ENCODE measurements at regions of chr11 and their contacts with region 1.

Region 1: GRCh38 chr11:68297812-68298658 is 14.4 kb upstream of the LRP5 start:
- DNase-seq: no peak
- ATAC-seq: peak; percentile 99
- H3K4me3 ChIP-seq: no peak overlapping the region
- H3K27ac ChIP-seq: no peak overlapping the region
- H3K4me1 ChIP-seq: peaks cover 9% of the 10 kb centered on the region
- H3K27me3 ChIP-seq: no peaks in the 10 kb centered on the region
- CTCF ChIP-seq: peak; percentile 95 to 99 (median 98)
- EP300 ChIP-seq: no peak
- POLR2A ChIP-seq: no peak
- RAD21 ChIP-seq: peak; percentile 100

Region 2: DNA sequence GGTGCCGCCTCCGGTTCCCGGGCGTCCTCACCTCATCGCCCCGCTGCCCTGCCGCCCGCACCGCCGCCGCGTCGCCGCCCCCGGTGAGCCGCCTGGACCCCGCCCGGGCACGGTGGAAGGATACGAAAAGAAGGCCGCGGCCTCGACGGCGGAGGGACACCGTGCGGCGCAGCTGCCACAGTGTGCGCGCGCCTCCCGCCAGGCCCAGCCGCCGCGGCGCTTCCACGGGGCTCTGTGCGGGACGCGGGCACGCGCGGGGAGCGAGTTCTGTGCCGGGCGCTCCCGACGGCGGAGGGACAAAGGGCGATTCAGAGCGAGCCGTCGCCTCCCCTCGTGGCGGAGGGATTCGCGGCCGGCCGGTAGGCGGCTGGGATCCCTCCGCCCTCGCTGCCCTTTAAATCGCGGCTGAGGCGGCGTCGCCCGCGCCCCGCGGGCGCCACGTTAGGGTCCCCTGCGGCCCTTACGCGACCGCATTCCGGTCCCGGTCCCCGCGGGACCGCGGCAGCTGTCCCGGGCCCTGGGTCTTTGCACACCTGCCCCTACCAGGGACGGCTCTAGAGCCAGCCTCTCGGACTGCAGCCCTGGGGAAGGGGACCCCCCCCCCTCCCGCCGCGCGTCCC is 84.4 kb before region 1 on chr11:
- CTCF ChIA-PET with region 1: interaction called, 51 read pairs
- POLR2A ChIA-PET with region 1: interaction called, 11 read pairs
- RAD21 ChIA-PET with region 1: interaction called, 12 read pairs
- SMC1A ChIA-PET with region 1: interaction called, 14 read pairs
- in situ Hi-C with region 1: no loop called
- intact Hi-C with region 1: loop called (anchors 1 kb)
- DNase-seq: no peak
- ATAC-seq: peak; percentile 60
- H3K4me3 ChIP-seq: peak overlapping the region; percentile 93
- H3K27ac ChIP-seq: peak overlapping the region; percentile 91
- H3K4me1 ChIP-seq: peaks cover 11% of the 10 kb centered on the region
- H3K27me3 ChIP-seq: no peaks in the 10 kb centered on the region
- CTCF ChIP-seq: no peak
- EP300 ChIP-seq: no peak
- POLR2A ChIP-seq: peak; percentile 99
- RAD21 ChIP-seq: no peak

Region 3: GRCh38 chr11:68257475-68258362 is 40.3 kb before region 1 on chr11:
- CTCF ChIA-PET with region 1: interaction called, 365 read pairs
- POLR2A ChIA-PET with region 1: interaction called, 12 read pairs
- RAD21 ChIA-PET with region 1: interaction called, 186 read pairs
- SMC1A ChIA-PET with region 1: interaction called, 134 read pairs
- in situ Hi-C with region 1: loop called (anchors 5 kb)
- intact Hi-C with region 1: loop called (anchors 1 kb)
- DNase-seq: no peak
- ATAC-seq: peak; percentile 99
- H3K4me3 ChIP-seq: no peak overlapping the region
- H3K27ac ChIP-seq: no peak overlapping the region
- H3K4me1 ChIP-seq: peaks cover 4% of the 10 kb centered on the region
- H3K27me3 ChIP-seq: no peaks in the 10 kb centered on the region; a peak in 1 of 4 replicates
- CTCF ChIP-seq: peak; percentile 74 to 78 (median 77)
- EP300 ChIP-seq: no peak
- POLR2A ChIP-seq: no peak; the same call in 1 of the 2 replicates
- RAD21 ChIP-seq: peak; percentile 97

Region 4: DNA sequence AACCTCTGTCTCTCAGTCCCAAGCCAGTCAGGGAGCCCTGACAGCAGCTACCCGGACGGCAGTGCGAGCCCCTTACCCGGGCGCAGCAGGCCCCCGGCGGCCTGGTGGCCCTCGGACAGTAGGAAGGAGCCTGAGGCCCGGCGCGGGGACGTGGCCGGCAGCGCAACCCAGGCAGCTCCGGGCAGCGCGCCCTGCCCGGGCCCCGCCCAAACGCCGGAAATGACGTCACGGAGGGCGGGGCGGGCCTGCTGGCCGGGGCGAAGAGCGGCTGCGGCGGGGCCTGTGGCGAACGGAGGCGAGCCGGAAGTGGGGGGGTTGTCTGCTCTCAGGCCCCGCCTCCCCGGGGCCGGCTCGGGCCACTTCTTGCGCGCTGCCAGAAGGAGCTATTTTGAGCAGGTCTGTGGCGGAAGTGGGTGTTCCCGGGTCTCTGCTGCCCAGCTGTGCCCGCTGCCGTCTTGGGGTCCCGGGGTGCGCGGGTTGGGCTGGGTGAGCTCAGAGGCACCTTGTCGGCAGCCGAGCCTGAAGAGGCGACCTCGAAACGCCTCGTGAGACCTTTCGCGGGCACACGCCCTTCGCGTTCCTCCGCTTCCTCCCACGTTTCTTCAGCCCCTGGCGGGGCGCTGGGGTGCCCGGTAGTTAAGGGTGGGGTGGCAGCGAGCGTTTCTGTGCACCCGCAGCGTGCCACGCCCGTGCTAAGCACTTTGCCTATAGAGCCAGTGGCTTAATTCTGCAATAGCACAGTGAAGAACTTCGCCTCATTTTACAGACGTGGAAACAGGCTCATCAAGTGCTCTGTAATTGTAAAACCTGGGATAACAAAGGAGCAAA is 26.0 kb before region 1 on chr11 and contains the start of gene C11orf24:
- CTCF ChIA-PET with region 1: interaction called, 365 read pairs
- POLR2A ChIA-PET with region 1: interaction called, 28 read pairs
- RAD21 ChIA-PET with region 1: interaction called, 31 read pairs
- SMC1A ChIA-PET with region 1: interaction called, 102 read pairs
- in situ Hi-C with region 1: no loop called
- intact Hi-C with region 1: loop called (anchors 1 kb)
- DNase-seq: peak; percentile 82
- ATAC-seq: peak; percentile 84
- H3K4me3 ChIP-seq: peak within 1 kb of the TSS; percentile 97
- H3K27ac ChIP-seq: peak within 1 kb of the TSS; percentile 95
- H3K4me1 ChIP-seq: peaks cover 29% of the 10 kb centered on the region
- H3K27me3 ChIP-seq: no peaks in the 10 kb centered on the region
- CTCF ChIP-seq: no peak
- EP300 ChIP-seq: no peak
- POLR2A ChIP-seq: peak; percentile 93
- RAD21 ChIP-seq: no peak
- polyA plus RNA-seq, gene C11orf24: 4.3 to 9.9 TPM

Region 5: DNA sequence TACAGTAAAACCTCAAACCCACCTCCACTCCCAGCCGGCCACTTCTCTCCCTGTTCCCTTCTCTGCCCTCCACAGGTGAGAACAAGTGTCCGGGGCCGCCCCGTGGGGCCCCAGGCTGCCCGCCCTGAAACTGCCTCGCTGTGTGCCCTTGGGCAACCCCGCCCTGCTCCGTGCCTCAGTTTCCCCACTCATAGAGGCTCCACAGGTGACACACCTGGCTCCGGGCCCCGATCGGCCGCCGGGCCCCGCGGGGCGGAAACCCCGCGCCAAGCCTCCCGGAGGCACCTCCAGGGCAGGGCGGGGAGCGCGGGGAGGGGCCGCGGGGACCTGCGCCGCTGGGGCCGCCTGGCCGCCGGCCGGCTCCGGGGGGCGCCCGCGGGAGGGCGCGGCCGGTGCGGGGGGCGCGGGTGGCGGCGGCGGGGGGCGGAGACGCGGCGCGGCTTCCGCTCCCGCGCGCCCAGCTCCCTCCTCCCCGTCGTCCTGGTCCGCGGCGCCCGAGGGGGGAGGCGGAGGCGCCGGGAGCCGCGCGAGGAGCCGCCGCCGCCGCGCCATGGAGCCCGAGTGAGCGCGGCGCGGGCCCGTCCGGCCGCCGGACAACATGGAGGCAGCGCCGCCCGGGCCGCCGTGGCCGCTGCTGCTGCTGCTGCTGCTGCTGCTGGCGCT is 14.2 kb after region 1 on chr11 and contains the start of gene LRP5:
- CTCF ChIA-PET with region 1: interaction called, 13 read pairs
- POLR2A ChIA-PET with region 1: interaction called, 3 read pairs
- RAD21 ChIA-PET with region 1: no interaction called
- SMC1A ChIA-PET with region 1: interaction called, 5 read pairs
- in situ Hi-C with region 1: no loop called
- intact Hi-C with region 1: no loop called
- DNase-seq: no peak
- ATAC-seq: peak; percentile 52
- H3K4me3 ChIP-seq: peak within 1 kb of the TSS; percentile 92
- H3K27ac ChIP-seq: peak within 1 kb of the TSS; percentile 36
- H3K4me1 ChIP-seq: peaks cover 6% of the 10 kb centered on the region
- H3K27me3 ChIP-seq: no peaks in the 10 kb centered on the region
- CTCF ChIP-seq: no peak
- EP300 ChIP-seq: no peak
- POLR2A ChIP-seq: 0 out of 2 replicates have a peak, but pooled peaks have one; percentile 27
- RAD21 ChIP-seq: no peak
- polyA plus RNA-seq, gene LRP5: 0.37 to 0.97 TPM

Region 6: GRCh38 chr11:68354148-68354872 is 56.3 kb after region 1 on chr11:
- CTCF ChIA-PET with region 1: no interaction called
- POLR2A ChIA-PET with region 1: no interaction called
- RAD21 ChIA-PET with region 1: no interaction called
- SMC1A ChIA-PET with region 1: no interaction called
- in situ Hi-C with region 1: no loop called
- intact Hi-C with region 1: no loop called
- DNase-seq: no peak
- ATAC-seq: no peak
- H3K4me3 ChIP-seq: no peak overlapping the region
- H3K27ac ChIP-seq: no peak overlapping the region
- H3K4me1 ChIP-seq: no peaks in the 10 kb centered on the region
- H3K27me3 ChIP-seq: no peaks in the 10 kb centered on the region
- CTCF ChIP-seq: no peak
- EP300 ChIP-seq: no peak
- POLR2A ChIP-seq: no peak
- RAD21 ChIP-seq: no peak

Region 7: GRCh38 chr11:68383976-68384501 is 86.0 kb after region 1 on chr11:
- CTCF ChIA-PET with region 1: interaction called, 62 read pairs
- POLR2A ChIA-PET with region 1: no interaction called
- RAD21 ChIA-PET with region 1: interaction called, 9 read pairs
- SMC1A ChIA-PET with region 1: interaction called, 8 read pairs
- in situ Hi-C with region 1: no loop called
- intact Hi-C with region 1: loop called (anchors 5 kb)
- DNase-seq: no peak
- ATAC-seq: peak; percentile 69
- H3K4me3 ChIP-seq: no peak overlapping the region
- H3K27ac ChIP-seq: no peak overlapping the region
- H3K4me1 ChIP-seq: peaks cover 32% of the 10 kb centered on the region
- H3K27me3 ChIP-seq: no peaks in the 10 kb centered on the region
- CTCF ChIP-seq: peak; percentile 86 to 97 (median 96)
- EP300 ChIP-seq: no peak
- POLR2A ChIP-seq: no peak
- RAD21 ChIP-seq: peak; percentile 96

Region 8: DNA sequence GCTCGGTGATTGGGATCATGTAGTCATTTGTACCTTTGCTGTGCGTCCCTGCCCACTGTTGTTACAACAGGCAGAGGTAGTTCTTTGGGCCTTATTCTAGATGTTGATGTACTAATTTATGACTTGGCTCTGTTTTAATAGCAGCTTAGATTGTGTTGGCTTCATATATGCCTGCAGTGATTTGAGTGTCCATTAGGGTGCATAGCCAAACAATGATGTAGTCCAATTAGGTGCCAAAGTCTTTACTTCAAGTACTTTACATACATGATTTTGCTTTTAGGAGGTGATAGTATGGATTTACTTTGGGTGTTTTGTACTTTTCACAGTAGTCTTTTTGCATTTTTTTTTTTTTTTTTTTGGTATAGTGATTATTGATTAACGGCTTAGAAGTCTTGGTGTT is 208.9 kb after region 1 on chr11:
- CTCF ChIA-PET with region 1: no interaction called
- POLR2A ChIA-PET with region 1: no interaction called
- RAD21 ChIA-PET with region 1: no interaction called
- SMC1A ChIA-PET with region 1: no interaction called
- in situ Hi-C with region 1: no loop called
- intact Hi-C with region 1: no loop called
- DNase-seq: no peak
- ATAC-seq: peak; percentile 57
- H3K4me3 ChIP-seq: no peak overlapping the region
- H3K27ac ChIP-seq: no peak overlapping the region
- H3K4me1 ChIP-seq: peaks cover 7% of the 10 kb centered on the region
- H3K27me3 ChIP-seq: no peaks in the 10 kb centered on the region
- CTCF ChIP-seq: peak in 2 of 3 experiments; percentile 9 to 18; a peak in 1 of 6 replicates
- EP300 ChIP-seq: no peak
- POLR2A ChIP-seq: no peak
- RAD21 ChIP-seq: no peak

Region 9: DNA sequence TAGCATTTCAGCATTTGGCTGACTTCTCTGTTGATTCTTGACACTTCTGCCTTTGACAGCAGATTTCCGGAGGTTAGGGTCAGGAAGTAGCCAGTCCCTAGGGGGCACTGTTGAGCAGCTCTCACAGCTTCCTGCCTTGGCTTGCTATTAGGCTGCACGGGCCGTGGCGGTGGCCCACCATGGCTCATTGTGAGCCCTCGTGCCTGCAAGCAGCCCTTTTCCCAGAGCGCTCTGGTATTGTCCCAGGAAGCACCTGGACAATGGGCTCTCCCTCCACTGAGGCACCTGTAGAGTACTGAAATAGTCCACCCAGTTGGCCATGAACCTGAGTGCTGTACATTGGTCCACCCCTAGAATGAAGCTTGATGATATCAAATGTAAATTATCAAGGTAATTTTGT is 286.1 kb after region 1 on chr11:
- CTCF ChIA-PET with region 1: no interaction called
- POLR2A ChIA-PET with region 1: no interaction called
- RAD21 ChIA-PET with region 1: no interaction called
- SMC1A ChIA-PET with region 1: no interaction called
- in situ Hi-C with region 1: no loop called
- intact Hi-C with region 1: no loop called
- DNase-seq: no peak
- ATAC-seq: peak; percentile 95
- H3K4me3 ChIP-seq: no peak overlapping the region
- H3K27ac ChIP-seq: no peak overlapping the region
- H3K4me1 ChIP-seq: no peaks in the 10 kb centered on the region
- H3K27me3 ChIP-seq: no peaks in the 10 kb centered on the region
- CTCF ChIP-seq: peak; percentile 49 to 77 (median 75)
- EP300 ChIP-seq: no peak
- POLR2A ChIP-seq: no peak
- RAD21 ChIP-seq: peak; percentile 34; the same call in 1 of the 2 replicates

Region 10: DNA sequence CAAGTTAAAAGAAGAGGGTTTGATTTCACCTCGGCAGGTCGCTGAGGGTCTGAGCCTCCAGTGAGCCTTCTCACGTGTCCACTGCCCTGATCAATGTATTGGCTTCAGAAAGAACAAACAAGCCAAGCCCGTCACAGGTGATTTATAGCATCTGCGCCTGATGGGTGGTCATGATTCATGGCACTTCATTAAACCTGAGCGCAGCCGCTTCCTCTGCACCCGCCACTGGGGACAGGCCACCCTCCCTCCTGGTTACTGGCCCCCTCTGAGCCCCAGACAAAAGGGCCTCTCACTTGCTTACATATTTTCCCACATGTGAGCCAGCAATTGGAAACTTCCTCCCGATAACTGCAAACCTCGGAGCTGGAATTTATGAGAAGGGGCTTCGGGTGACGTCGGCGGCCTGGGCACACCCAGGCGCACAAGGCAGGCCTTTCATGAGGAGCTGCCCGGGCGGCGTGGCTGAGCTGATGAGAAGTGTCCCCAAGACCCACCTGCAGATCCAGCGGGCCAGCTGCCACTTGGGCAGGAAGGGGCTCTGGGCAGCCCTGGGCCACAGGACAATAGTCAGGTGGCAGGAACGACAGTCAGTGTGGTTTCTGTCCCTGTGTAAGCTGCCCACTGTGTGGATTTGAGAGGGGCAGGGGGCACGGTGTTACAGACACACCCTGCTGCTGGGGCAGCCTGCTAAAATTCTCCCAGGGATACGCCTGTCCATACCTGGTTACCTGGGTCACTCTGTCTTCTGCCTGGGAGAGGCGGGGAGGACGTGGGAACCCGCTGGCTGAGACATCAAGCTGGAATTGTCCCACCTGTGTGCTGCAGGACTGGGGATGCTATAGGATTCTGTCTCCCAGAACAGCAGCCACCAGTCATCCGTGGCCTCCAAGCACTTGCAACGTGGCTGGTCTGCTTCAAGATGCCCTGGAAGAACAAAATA is 1119.4 kb after region 1 on chr11:
- CTCF ChIA-PET with region 1: no interaction called
- POLR2A ChIA-PET with region 1: no interaction called
- RAD21 ChIA-PET with region 1: no interaction called
- SMC1A ChIA-PET with region 1: no interaction called
- in situ Hi-C with region 1: no loop called
- intact Hi-C with region 1: no loop called
- DNase-seq: no peak
- ATAC-seq: no peak
- H3K4me3 ChIP-seq: no peak overlapping the region
- H3K27ac ChIP-seq: no peak overlapping the region
- H3K4me1 ChIP-seq: no peaks in the 10 kb centered on the region
- H3K27me3 ChIP-seq: no peaks in the 10 kb centered on the region; a peak in 1 of 4 replicates
- CTCF ChIP-seq: no peak
- EP300 ChIP-seq: no peak
- POLR2A ChIP-seq: no peak
- RAD21 ChIP-seq: no peak